Mammary epithelial cell (primary cell): ENCODE measurements at regions of chr3 and their contacts with region 1.

Region 1: GRCh38 chr3:25648107-25648535 is 16.6 kb downstream of the TOP2B start:
- DNase-seq: peak; percentile 72
- H3K4me3 ChIP-seq: no peak overlapping the region
- H3K27ac ChIP-seq: no peak overlapping the region
- H3K4me1 ChIP-seq: no peaks in the 10 kb centered on the region
- H3K27me3 ChIP-seq: no peaks in the 10 kb centered on the region
- CTCF ChIP-seq: peak; percentile 93 to 98

Region 2: GRCh38 chr3:25313286-25313685 is 334.8 kb before region 1 on chr3:
- CTCF ChIA-PET with region 1: no interaction called
- dilution Hi-C with region 1: no loop called
- in situ Hi-C with region 1: no loop called
- intact Hi-C with region 1: no loop called
- DNase-seq: no peak
- H3K4me3 ChIP-seq: no peak overlapping the region
- H3K27ac ChIP-seq: no peak overlapping the region
- H3K4me1 ChIP-seq: no peaks in the 10 kb centered on the region
- H3K27me3 ChIP-seq: no peaks in the 10 kb centered on the region
- CTCF ChIP-seq: no peak

Region 3: GRCh38 chr3:25831578-25831977 is 183.5 kb after region 1 on chr3:
- CTCF ChIA-PET with region 1: interaction called, 6 read pairs
- dilution Hi-C with region 1: no loop called
- in situ Hi-C with region 1: no loop called
- intact Hi-C with region 1: loop called (anchors 2 kb)
- DNase-seq: peak; percentile 12
- H3K4me3 ChIP-seq: no peak overlapping the region
- H3K27ac ChIP-seq: no peak overlapping the region
- H3K4me1 ChIP-seq: no peaks in the 10 kb centered on the region
- H3K27me3 ChIP-seq: no peaks in the 10 kb centered on the region
- CTCF ChIP-seq: peak; percentile 36 to 53

Region 4: GRCh38 chr3:25856902-25857518 is 208.9 kb after region 1 on chr3:
- CTCF ChIA-PET with region 1: interaction called, 5 read pairs
- dilution Hi-C with region 1: no loop called
- in situ Hi-C with region 1: loop called (anchors 10 to 25 kb)
- intact Hi-C with region 1: loop called (anchors 1 kb)
- DNase-seq: peak; percentile 12
- H3K4me3 ChIP-seq: no peak overlapping the region
- H3K27ac ChIP-seq: no peak overlapping the region
- H3K4me1 ChIP-seq: peaks cover 4% of the 10 kb centered on the region
- H3K27me3 ChIP-seq: no peaks in the 10 kb centered on the region
- CTCF ChIP-seq: peak; percentile 65 to 83

Region 5: DNA sequence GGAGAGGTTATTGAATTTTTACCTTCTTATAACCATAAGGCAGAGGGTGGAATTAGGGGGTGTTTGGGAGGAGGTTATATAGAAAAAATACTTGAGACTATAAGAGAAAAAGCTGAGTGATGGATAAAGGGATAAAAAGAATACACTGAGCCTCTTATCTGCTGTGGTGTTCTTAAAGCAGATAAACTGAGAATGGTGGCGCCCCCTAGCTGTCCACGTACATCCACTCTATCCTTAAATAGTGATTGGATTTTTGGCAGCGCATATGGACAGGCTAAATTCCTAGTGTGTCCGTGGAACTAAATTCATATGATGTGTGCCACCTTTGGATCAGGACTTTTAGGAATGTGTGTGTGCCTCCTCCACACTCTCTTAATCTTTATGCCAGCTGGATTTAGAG is 262.9 kb after region 1 on chr3:
- CTCF ChIA-PET with region 1: no interaction called
- dilution Hi-C with region 1: no loop called
- in situ Hi-C with region 1: no loop called
- intact Hi-C with region 1: loop called (anchors 1 kb)
- DNase-seq: no peak
- H3K4me3 ChIP-seq: no peak overlapping the region
- H3K27ac ChIP-seq: no peak overlapping the region
- H3K4me1 ChIP-seq: no peaks in the 10 kb centered on the region
- H3K27me3 ChIP-seq: no peaks in the 10 kb centered on the region
- CTCF ChIP-seq: peak; percentile 34 to 40

Region 6: DNA sequence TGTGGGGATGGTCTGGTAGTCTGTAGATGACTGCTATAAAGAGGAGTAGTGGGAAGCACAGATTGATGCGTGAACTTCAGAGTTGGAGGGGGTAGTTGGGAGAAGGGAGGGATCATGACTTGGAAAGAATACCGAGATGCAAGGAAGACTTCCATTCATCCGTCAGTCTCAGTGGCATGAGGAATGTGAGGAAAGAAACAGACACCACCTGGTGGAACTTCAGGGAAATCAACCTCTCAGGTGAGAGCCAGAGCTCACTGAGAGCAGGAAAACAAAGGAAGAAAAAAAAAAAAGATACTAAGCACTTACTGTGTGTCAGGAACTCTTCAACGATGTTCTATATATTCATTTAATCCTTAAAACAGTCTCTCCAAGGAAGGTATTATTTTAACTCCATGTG is 314.1 kb after region 1 on chr3:
- CTCF ChIA-PET with region 1: interaction called, 4 read pairs
- dilution Hi-C with region 1: no loop called
- in situ Hi-C with region 1: no loop called
- intact Hi-C with region 1: loop called (anchors 2 kb)
- DNase-seq: peak; percentile 14
- H3K4me3 ChIP-seq: no peak overlapping the region
- H3K27ac ChIP-seq: no peak overlapping the region
- H3K4me1 ChIP-seq: no peaks in the 10 kb centered on the region
- H3K27me3 ChIP-seq: no peaks in the 10 kb centered on the region
- CTCF ChIP-seq: peak; percentile 21 to 50